ENCODE measurements at regions of chr12 and their contacts with region 1.

Region 1: DNA sequence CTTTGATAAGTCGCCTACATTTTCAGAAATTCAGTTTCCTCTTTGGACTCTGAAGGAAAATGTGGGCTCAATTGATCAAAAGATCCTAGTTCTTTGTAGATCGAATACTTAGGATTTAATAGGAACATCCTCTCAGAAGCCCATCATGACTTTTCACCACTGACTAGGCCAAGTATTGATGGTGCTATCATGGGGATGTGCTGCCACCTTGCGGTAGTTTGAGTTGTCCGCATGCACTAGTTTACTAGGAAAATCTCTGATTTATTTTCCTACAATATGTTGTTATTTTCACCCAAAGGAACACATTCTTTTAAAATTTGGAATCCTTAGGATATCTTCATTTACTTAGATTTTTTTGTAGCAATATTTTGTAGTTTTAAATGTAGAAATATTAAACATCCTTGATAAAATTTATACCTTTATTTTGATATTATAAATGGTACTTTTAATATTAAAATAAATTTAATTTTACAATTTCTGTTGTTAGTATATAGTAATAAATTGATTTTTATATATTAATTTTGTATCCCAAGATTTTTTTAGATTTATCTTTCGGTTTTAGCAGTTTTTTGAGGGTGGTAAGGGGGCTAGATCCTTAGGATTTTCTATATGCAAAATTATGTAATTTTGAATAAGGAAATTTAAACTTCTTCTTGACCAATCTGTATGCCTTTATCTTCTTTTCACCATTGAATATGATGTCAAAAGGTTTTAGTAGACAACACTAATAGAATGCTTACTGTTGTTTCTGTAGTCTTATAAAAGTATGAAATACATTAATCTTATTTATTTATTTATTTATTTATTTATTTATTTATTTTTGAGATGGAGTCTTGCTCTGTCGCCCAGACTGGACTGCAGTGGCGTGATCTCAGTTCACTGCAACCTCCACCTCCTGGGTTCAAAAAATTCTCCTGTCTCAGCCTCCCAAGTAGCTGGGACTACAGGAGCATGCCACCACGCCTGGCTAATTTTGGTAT is 52.9 kb upstream of the OR9K2 start:
- DNase-seq: peak; percentile 47 to 88 (median 85)
- ATAC-seq: peak; percentile 60
- H3K4me3 ChIP-seq: no peak overlapping the region
- H3K4me3 Mint-ChIP-seq: no peak overlapping the region
- H3K27ac ChIP-seq: no peak overlapping the region
- H3K27ac Mint-ChIP-seq: no peak overlapping the region
- H3K4me1 ChIP-seq: no peaks in the 10 kb centered on the region
- H3K4me1 Mint-ChIP-seq: peaks cover 2% of the 10 kb centered on the region
- H3K27me3 ChIP-seq: no peaks in the 10 kb centered on the region
- H3K27me3 Mint-ChIP-seq: peaks cover 23% of the 10 kb centered on the region
- CTCF ChIP-seq: peak; percentile 79

Region 2: DNA sequence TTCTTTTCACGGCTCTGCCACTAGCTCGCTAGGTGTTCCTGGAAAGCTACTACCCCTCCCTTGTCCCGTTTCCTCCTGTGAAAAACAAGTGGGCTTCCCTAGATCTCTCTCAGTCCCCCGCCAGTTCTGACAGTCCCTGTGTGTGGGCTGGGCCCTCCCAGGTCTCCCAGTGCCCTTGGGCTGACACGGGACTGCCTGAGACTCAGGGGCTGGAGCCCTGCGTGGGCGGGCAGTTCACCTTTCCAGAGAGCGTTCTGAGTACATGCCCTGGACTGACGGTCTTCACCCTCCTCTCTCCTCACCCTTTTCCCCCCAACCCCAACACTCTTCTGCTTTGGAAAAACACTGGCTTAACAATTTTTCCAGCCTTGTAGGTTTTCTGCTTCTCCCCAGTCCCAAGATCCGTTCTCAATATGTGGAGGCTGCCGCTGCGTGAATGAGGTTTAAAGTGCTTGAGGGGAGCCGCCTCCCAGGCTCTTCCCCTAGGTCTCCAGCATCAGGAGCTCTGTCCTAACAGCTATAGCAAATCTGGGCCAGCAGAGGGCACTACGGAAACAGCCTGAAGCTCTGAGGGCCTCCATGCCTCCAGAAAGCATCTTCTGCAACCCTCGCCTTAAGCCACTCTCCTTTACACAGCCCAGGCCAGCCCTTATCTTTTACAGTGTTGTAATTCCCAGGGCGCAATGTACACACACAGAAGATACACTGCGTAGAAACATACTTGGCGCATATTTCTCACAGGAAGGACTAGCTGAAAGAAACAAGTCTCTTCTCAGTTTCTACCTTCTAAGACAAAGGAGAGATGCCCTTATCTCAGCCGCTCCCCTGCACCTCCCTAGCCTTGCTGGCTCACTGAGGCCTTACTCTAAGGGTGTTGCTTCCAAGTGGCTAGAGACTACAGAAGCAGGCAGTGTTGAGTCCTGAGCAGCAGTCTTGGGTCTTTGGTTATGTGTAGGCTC is 414.7 kb before region 1 on chr12:
- CTCF ChIA-PET with region 1: interaction called, 7 read pairs
- POLR2A ChIA-PET with region 1: no interaction called
- intact Hi-C with region 1: loop called in 1 of 2 experiments (anchors 5 kb)
- DNase-seq: peak in 8 of 9 experiments; percentile 5 to 57 (median 38)
- ATAC-seq: no peak
- H3K4me3 ChIP-seq: no peak overlapping the region
- H3K4me3 Mint-ChIP-seq: no peak overlapping the region
- H3K27ac ChIP-seq: no peak overlapping the region
- H3K27ac Mint-ChIP-seq: no peak overlapping the region
- H3K4me1 ChIP-seq: no peaks in the 10 kb centered on the region
- H3K4me1 Mint-ChIP-seq: no peaks in the 10 kb centered on the region
- H3K27me3 ChIP-seq: no peaks in the 10 kb centered on the region
- H3K27me3 Mint-ChIP-seq: peaks cover 17% of the 10 kb centered on the region
- CTCF ChIP-seq: peak; percentile 51

Region 3: GRCh38 chr12:54749191-54749818 is 324.0 kb before region 1 on chr12:
- CTCF ChIA-PET with region 1: interaction called, 132 read pairs
- POLR2A ChIA-PET with region 1: interaction called, 3 read pairs
- intact Hi-C with region 1: loop called (anchors 1 kb)
- DNase-seq: peak in 6 of 9 experiments; percentile 23 to 82 (median 42)
- ATAC-seq: peak; percentile 67
- H3K4me3 ChIP-seq: no peak overlapping the region
- H3K4me3 Mint-ChIP-seq: peak overlapping the region; percentile 61
- H3K27ac ChIP-seq: no peak overlapping the region
- H3K27ac Mint-ChIP-seq: no peak overlapping the region
- H3K4me1 ChIP-seq: peaks cover 20% of the 10 kb centered on the region
- H3K4me1 Mint-ChIP-seq: peaks cover 34% of the 10 kb centered on the region
- H3K27me3 ChIP-seq: no peaks in the 10 kb centered on the region
- H3K27me3 Mint-ChIP-seq: no peaks in the 10 kb centered on the region
- CTCF ChIP-seq: peak; percentile 83

Region 4: DNA sequence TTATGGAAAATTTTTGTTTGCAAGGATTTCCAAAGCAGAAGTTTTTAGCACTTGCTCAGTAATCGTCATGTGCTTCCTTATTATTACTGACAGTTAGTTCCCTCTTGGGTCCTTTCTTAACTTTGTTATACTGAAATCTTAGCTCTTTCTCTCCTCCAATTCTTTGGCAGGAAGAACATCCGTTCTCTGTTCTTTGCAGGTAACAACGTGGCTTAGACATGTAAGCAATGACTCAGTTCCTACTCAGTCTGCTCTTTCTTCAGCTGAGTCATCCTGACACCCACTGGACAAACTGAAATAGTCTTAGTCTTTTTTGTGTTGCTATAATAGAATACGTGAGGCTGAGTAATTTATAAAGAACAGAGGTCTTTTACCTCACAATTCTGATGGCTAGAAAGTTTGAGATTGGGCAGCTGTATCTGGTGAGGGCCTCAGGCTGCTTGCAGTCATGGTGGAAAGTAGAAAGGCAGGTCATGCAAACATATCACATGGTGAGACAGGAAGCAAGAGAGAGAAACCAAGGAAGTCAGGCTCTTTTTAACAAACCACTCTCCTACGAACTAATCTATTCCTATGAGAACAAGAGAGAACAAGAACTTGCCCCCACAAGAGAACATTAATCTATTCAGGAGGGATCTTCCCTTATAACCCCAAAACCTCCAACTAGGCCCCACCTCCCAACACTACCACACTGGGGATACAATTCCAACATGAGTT is 137.9 kb before region 1 on chr12:
- CTCF ChIA-PET with region 1: interaction called, 17 read pairs
- POLR2A ChIA-PET with region 1: no interaction called
- intact Hi-C with region 1: no loop called
- DNase-seq: peak in 7 of 9 experiments; percentile 12 to 69 (median 36)
- ATAC-seq: peak; percentile 91
- H3K4me3 ChIP-seq: no peak overlapping the region
- H3K4me3 Mint-ChIP-seq: peak overlapping the region; percentile 55
- H3K27ac ChIP-seq: peak overlapping the region in 1 of 2 experiments; percentile 66
- H3K27ac Mint-ChIP-seq: peak overlapping the region; percentile 93
- H3K4me1 ChIP-seq: peaks cover 37% of the 10 kb centered on the region
- H3K4me1 Mint-ChIP-seq: peaks cover 47% of the 10 kb centered on the region
- H3K27me3 ChIP-seq: no peaks in the 10 kb centered on the region
- H3K27me3 Mint-ChIP-seq: no peaks in the 10 kb centered on the region
- CTCF ChIP-seq: no peak

Region 5: DNA sequence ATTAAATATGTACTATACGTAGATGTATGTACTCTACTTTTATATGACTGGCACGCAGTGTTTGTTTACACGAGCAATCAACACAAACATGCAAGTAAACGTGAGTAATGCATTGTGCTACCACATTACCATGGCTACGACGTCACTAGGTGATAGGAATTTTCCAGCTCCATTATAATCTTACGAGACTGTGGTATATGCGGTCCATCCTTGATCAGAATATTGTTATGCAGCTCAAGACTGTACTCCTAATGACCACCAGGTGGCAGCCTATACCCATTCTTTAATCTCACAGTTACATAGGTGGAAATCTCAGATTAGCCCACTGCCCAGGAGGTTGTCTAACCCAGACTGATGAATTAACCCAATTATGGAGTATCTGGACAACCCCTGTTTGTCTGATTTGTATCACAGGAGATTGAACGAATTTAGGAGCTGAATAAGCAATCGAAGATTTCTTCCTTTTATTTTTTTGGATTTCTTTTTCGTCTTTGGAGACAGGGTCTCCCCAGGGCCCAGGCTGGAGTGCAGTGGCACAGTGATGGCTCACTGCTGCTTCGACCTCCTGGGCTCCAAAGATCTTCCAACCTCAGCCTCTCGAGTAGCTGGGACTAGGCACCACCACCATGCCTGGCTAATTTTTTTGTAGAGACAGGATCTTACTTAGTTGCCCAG is 80.0 kb before region 1 on chr12:
- CTCF ChIA-PET with region 1: interaction called, 754 read pairs
- POLR2A ChIA-PET with region 1: interaction called, 23 read pairs
- intact Hi-C with region 1: loop called (anchors 1 kb)
- DNase-seq: peak in 7 of 9 experiments; percentile 32 to 89 (median 59)
- ATAC-seq: peak; percentile 72
- H3K4me3 ChIP-seq: no peak overlapping the region
- H3K4me3 Mint-ChIP-seq: no peak overlapping the region
- H3K27ac ChIP-seq: no peak overlapping the region
- H3K27ac Mint-ChIP-seq: no peak overlapping the region
- H3K4me1 ChIP-seq: peaks cover 48% of the 10 kb centered on the region
- H3K4me1 Mint-ChIP-seq: peaks cover 49% of the 10 kb centered on the region
- H3K27me3 ChIP-seq: no peaks in the 10 kb centered on the region
- H3K27me3 Mint-ChIP-seq: no peaks in the 10 kb centered on the region
- CTCF ChIP-seq: peak; percentile 93

Region 6: GRCh38 chr12:55049676-55050075 is 23.7 kb before region 1 on chr12:
- CTCF ChIA-PET with region 1: interaction called, 34 read pairs
- POLR2A ChIA-PET with region 1: no interaction called
- intact Hi-C with region 1: no loop called
- DNase-seq: no peak
- ATAC-seq: no peak
- H3K4me3 ChIP-seq: no peak overlapping the region
- H3K4me3 Mint-ChIP-seq: no peak overlapping the region
- H3K27ac ChIP-seq: no peak overlapping the region
- H3K27ac Mint-ChIP-seq: no peak overlapping the region
- H3K4me1 ChIP-seq: no peaks in the 10 kb centered on the region
- H3K4me1 Mint-ChIP-seq: no peaks in the 10 kb centered on the region
- H3K27me3 ChIP-seq: no peaks in the 10 kb centered on the region
- H3K27me3 Mint-ChIP-seq: no peaks in the 10 kb centered on the region
- CTCF ChIP-seq: no peak

Region 7: DNA sequence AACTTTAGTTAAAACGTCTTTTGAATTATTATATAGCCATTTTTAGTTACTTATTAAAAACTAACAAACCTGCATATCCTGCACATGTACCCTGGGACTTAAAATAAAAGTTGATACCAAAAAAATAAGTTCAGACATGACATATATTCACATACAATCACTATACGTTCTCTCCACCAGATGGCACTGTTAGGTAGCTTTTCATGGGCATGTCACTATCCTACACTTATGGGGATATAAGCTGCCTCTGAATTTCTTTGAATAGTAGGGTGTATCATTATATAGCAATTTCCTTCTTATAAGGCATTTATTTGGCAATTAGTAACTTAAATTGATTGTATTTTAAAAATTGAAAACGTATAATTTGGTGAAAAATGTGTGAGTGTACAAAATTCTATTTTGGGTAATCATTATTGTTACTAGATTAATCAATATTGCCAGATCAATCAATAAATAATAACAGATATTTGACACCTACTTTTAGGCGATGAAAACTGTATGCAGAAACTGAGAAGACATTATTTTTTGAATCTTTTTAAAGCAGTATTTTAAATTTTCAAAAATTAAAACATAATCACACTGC is 115.7 kb after region 1 on chr12:
- CTCF ChIA-PET with region 1: no interaction called
- POLR2A ChIA-PET with region 1: no interaction called
- intact Hi-C with region 1: no loop called
- DNase-seq: peak in 5 of 9 experiments; percentile 16 to 79 (median 44)
- ATAC-seq: peak; percentile 73
- H3K4me3 ChIP-seq: no peak overlapping the region
- H3K4me3 Mint-ChIP-seq: no peak overlapping the region
- H3K27ac ChIP-seq: no peak overlapping the region
- H3K27ac Mint-ChIP-seq: no peak overlapping the region
- H3K4me1 ChIP-seq: no peaks in the 10 kb centered on the region
- H3K4me1 Mint-ChIP-seq: no peaks in the 10 kb centered on the region
- H3K27me3 ChIP-seq: peaks cover 3% of the 10 kb centered on the region in 2 experiments
- H3K27me3 Mint-ChIP-seq: peaks cover 35% of the 10 kb centered on the region
- CTCF ChIP-seq: peak; percentile 93